ENCODE measurements at regions of chrX and their contacts with region 1.

Region 1: DNA sequence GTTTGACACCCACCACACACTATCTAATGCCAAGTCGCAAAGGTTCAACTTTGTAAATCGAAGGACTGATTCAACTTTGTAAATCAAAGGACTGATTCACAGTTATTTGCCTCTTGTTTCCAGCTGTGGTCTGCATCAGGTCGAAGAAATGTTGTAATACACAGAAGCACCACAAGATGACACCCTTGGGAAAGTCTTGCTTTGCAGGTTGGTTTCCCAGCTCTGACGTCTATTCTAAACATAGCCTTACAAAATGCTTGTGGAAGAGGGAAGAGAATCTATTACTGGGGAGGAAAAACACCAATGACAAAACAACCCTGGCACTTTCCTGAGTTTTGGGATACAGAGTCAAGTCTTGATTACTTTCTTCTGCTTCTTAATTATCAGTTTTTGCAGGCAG is 35.3 kb downstream of the SUPT20HL1 start:
- DNase-seq: peak; percentile 54 to 78 (median 58)
- ATAC-seq: peak; percentile 92
- H3K4me3 ChIP-seq: no peak overlapping the region
- H3K27ac ChIP-seq: peak overlapping the region in 3 of 4 donors; percentile 39 to 65 (median 64)
- H3K4me1 ChIP-seq: peaks cover 12% of the 10 kb centered on the region
- H3K27me3 ChIP-seq: no peaks in the 10 kb centered on the region
- CTCF ChIP-seq: peak; percentile 30 to 93 (median 79)
- POLR2A ChIP-seq: no peak

Region 2: GRCh38 chrX:24498975-24499374 is 103.2 kb after region 1 on chrX:
- intact Hi-C with region 1: loop called (anchors 10 kb)
- DNase-seq: no peak
- ATAC-seq: peak; percentile 67
- H3K4me3 ChIP-seq: no peak overlapping the region
- H3K27ac ChIP-seq: peak overlapping the region in 1 of 4 donors; percentile 31
- H3K4me1 ChIP-seq: no peaks in the 10 kb centered on the region
- H3K27me3 ChIP-seq: no peaks in the 10 kb centered on the region
- CTCF ChIP-seq: peak; percentile 30 to 73 (median 62)
- POLR2A ChIP-seq: no peak

Measured in body of pancreas (tissue), 4 donors.